CD8-positive, alpha-beta T cell (primary cell): ENCODE measurements at regions of chr12 and their contacts with region 1.

Region 1: GRCh38 chr12:44847888-44848702 is 28.0 kb downstream of the NELL2 start:
- DNase-seq: peak; percentile 34 to 94 (median 69)
- ATAC-seq: peak; percentile 83
- H3K4me3 ChIP-seq: peak overlapping the region; percentile 14 to 39
- H3K4me3 Mint-ChIP-seq: peak overlapping the region; percentile 64
- H3K27ac ChIP-seq: peak overlapping the region; percentile 81 to 85
- H3K27ac Mint-ChIP-seq: peak overlapping the region; percentile 99
- H3K4me1 ChIP-seq: peaks cover 93% of the 10 kb centered on the region
- H3K4me1 Mint-ChIP-seq: peaks cover 88% of the 10 kb centered on the region
- H3K27me3 ChIP-seq: no peaks in the 10 kb centered on the region
- H3K27me3 Mint-ChIP-seq: no peaks in the 10 kb centered on the region
- CTCF ChIP-seq: no peak

Region 2: DNA sequence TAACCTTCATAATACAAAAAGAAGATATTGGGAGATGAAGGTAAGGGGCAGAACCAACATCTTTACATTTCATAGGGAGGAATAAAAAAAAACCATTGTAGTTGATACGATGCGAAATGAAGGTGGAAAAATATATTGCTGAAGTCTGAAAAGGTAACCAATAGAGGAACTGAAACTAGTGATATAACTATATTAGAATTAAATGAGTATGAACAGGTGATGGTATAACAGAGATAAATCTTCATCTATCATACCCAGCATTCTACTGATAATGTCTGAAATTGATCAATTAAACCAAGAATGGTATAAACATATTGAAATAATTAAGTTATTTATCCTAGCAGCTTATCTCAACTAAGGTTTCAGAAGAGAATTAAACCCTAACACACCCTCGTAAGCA is 304.1 kb before region 1 on chr12:
- CTCF ChIA-PET with region 1: no interaction called
- POLR2A ChIA-PET with region 1: no interaction called
- intact Hi-C with region 1: no loop called
- DNase-seq: no peak
- ATAC-seq: no peak
- H3K4me3 ChIP-seq: no peak overlapping the region
- H3K4me3 Mint-ChIP-seq: no peak overlapping the region
- H3K27ac ChIP-seq: no peak overlapping the region
- H3K27ac Mint-ChIP-seq: peak overlapping the region; percentile 35
- H3K4me1 ChIP-seq: peaks cover 37% of the 10 kb centered on the region
- H3K4me1 Mint-ChIP-seq: peaks cover 60% of the 10 kb centered on the region
- H3K27me3 ChIP-seq: no peaks in the 10 kb centered on the region
- H3K27me3 Mint-ChIP-seq: no peaks in the 10 kb centered on the region
- CTCF ChIP-seq: no peak

Region 3: GRCh38 chr12:44717612-44718011 is 130.5 kb before region 1 on chr12:
- CTCF ChIA-PET with region 1: no interaction called
- POLR2A ChIA-PET with region 1: no interaction called
- intact Hi-C with region 1: no loop called
- DNase-seq: no peak
- ATAC-seq: no peak
- H3K4me3 ChIP-seq: no peak overlapping the region
- H3K4me3 Mint-ChIP-seq: no peak overlapping the region
- H3K27ac ChIP-seq: no peak overlapping the region
- H3K27ac Mint-ChIP-seq: peak overlapping the region; percentile 20
- H3K4me1 ChIP-seq: peaks cover 26% of the 10 kb centered on the region
- H3K4me1 Mint-ChIP-seq: peaks cover 54% of the 10 kb centered on the region
- H3K27me3 ChIP-seq: no peaks in the 10 kb centered on the region
- H3K27me3 Mint-ChIP-seq: no peaks in the 10 kb centered on the region
- CTCF ChIP-seq: no peak

Region 4: DNA sequence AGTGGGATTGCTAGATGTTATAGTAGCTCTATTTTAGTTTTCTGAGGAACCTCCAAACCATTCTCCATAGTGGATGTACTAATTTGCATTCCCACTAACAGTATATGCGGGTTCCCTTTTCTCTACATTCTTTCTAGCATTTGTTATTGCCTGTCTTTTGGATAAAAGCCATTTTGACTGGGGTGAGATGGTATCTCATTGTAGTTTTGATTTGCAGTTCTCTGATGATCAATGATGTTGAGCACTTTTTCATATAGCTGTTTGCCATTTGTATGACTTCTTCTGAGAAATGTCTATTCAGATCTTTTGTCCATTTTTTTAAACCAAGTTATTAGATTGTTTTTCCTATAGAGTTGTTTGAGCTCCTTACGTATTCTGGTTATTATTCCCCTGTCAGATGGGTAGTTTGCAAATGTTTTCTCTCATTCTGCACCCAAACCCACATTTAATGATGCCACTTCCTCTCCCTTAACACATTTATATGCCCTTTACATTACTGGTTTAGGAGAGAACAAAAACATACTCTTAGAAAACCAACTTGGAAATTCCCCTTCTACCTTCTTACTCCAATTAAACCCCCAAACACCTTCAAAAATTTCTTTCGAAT is 20.2 kb before region 1 on chr12:
- CTCF ChIA-PET with region 1: interaction called, 6 read pairs
- POLR2A ChIA-PET with region 1: interaction called, 44 read pairs
- intact Hi-C with region 1: loop called (anchors 2 kb)
- DNase-seq: peak in 2 of 9 experiments; percentile 77 to 89
- ATAC-seq: peak; percentile 86
- H3K4me3 ChIP-seq: peak overlapping the region in 1 of 2 experiments; percentile 9
- H3K4me3 Mint-ChIP-seq: peak overlapping the region; percentile 65
- H3K27ac ChIP-seq: peak overlapping the region; percentile 63 to 78
- H3K27ac Mint-ChIP-seq: peak overlapping the region; percentile 90
- H3K4me1 ChIP-seq: peaks cover 58% of the 10 kb centered on the region
- H3K4me1 Mint-ChIP-seq: peaks cover 69% of the 10 kb centered on the region
- H3K27me3 ChIP-seq: no peaks in the 10 kb centered on the region
- H3K27me3 Mint-ChIP-seq: no peaks in the 10 kb centered on the region
- CTCF ChIP-seq: no peak

Region 5: DNA sequence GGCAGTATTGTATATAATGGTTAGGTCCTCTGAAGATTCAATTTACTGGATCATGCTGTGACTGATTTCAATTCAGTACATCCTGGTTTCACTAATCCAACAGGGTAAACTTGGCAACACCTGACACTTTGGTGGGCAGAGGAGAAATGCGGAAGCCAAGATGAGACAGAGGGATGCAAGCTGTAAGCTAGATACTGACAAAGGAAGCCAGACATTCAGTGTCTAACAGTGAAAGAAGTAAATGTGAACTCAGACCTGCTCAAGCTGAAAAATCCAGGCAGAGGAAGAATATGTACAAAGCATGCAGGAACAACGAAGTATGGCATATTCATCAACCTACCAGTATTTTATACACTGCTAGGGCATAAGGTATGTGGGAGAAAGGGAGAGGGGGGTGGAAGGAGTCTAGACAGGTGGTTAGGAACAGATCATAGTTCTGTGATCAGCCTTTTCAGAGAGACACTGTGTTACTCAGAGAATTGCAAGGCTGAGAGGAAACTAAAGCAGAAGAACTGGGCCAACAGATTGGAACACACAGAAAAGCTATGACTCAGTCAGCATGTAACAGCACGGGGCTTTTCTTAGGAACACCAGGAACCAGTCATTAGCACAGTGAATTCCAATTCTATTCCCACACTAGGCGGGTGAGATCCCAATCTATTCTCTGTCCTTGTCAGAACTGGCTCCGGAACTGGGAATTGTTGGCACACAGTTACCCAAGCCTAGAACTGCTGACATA is 12.3 kb before region 1 on chr12:
- CTCF ChIA-PET with region 1: no interaction called
- POLR2A ChIA-PET with region 1: interaction called, 44 read pairs
- intact Hi-C with region 1: loop called (anchors 1 to 2 kb)
- DNase-seq: peak in 4 of 9 experiments; percentile 31 to 62 (median 39)
- ATAC-seq: peak; percentile 87
- H3K4me3 ChIP-seq: peak overlapping the region; percentile 12 to 20
- H3K4me3 Mint-ChIP-seq: peak overlapping the region; percentile 73
- H3K27ac ChIP-seq: peak overlapping the region; percentile 42 to 57
- H3K27ac Mint-ChIP-seq: peak overlapping the region; percentile 94
- H3K4me1 ChIP-seq: peaks cover 90% of the 10 kb centered on the region
- H3K4me1 Mint-ChIP-seq: peaks cover 93% of the 10 kb centered on the region
- H3K27me3 ChIP-seq: no peaks in the 10 kb centered on the region
- H3K27me3 Mint-ChIP-seq: no peaks in the 10 kb centered on the region
- CTCF ChIP-seq: no peak

Region 6: GRCh38 chr12:44858226-44858855 is 10.2 kb after region 1 on chr12:
- CTCF ChIA-PET with region 1: interaction called, 5 read pairs
- POLR2A ChIA-PET with region 1: interaction called, 23 read pairs
- intact Hi-C with region 1: loop called (anchors 1 to 2 kb)
- DNase-seq: no peak
- ATAC-seq: no peak
- H3K4me3 ChIP-seq: no peak overlapping the region
- H3K4me3 Mint-ChIP-seq: peak overlapping the region; percentile 44
- H3K27ac ChIP-seq: no peak overlapping the region
- H3K27ac Mint-ChIP-seq: peak overlapping the region; percentile 60
- H3K4me1 ChIP-seq: peaks cover 97% of the 10 kb centered on the region
- H3K4me1 Mint-ChIP-seq: peaks cover 85% of the 10 kb centered on the region
- H3K27me3 ChIP-seq: peaks cover 0 to 2% of the 10 kb centered on the region in 2 experiments
- H3K27me3 Mint-ChIP-seq: no peaks in the 10 kb centered on the region
- CTCF ChIP-seq: no peak

Region 7: GRCh38 chr12:44863867-44864266 is 15.8 kb after region 1 on chr12:
- CTCF ChIA-PET with region 1: interaction called, 5 read pairs
- POLR2A ChIA-PET with region 1: interaction called, 23 read pairs
- intact Hi-C with region 1: loop called (anchors 1 to 2 kb)
- DNase-seq: peak in 2 of 9 experiments; percentile 53 to 74
- ATAC-seq: peak; percentile 74
- H3K4me3 ChIP-seq: no peak overlapping the region
- H3K4me3 Mint-ChIP-seq: no peak overlapping the region
- H3K27ac ChIP-seq: no peak overlapping the region
- H3K27ac Mint-ChIP-seq: peak overlapping the region; percentile 89
- H3K4me1 ChIP-seq: peaks cover 49% of the 10 kb centered on the region
- H3K4me1 Mint-ChIP-seq: peaks cover 65% of the 10 kb centered on the region
- H3K27me3 ChIP-seq: peaks cover 0 to 2% of the 10 kb centered on the region in 2 experiments
- H3K27me3 Mint-ChIP-seq: no peaks in the 10 kb centered on the region
- CTCF ChIP-seq: no peak